Esophagus squamous epithelium (tissue), 5 donors: ENCODE measurements at regions of chr9 and their contacts with region 1.

Region 1: DNA sequence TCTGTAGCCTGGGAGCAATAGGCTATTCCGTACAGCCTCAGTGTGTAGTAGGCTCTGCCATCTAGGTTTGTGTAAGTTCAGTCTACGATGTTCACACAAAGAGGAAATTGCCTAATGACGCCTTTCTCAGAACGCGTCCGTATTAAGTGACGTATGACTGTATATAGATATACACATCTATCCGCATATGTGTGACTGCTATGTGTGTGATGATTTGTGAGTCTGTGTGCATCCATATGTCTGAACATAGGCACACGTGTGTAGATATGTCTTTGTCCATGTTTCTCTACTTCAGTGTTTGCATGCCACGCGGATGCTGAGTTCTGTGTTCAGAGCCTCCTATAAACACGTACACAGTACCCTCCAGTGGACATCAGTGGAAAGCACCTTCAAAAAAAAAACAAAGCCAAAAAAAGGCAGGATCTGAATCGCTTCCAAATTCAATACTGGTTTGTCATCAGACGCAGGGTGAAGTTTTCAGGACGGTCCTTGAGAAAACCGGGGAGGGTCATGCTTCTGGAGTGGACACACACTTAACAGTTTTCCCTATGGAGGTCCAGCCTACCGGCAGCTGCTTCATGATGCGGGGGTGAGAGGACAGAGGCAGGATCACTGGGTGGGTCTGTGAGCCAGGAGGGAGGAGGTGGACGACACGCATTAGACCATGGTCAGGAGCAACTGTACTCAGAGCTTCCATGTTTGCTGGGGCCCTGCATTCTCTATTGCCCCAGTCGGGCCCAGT is 29.5 kb upstream of the ALDH1B1 start:
- DNase-seq: peak; percentile 7
- H3K4me3 ChIP-seq: peak overlapping the region in 1 of 4 donors; percentile 29
- H3K27ac ChIP-seq: peak overlapping the region in 1 of 4 donors; percentile 22
- H3K4me1 ChIP-seq: peaks cover 0 to 24% (median 0%) of the 10 kb centered on the region in 3 donors
- H3K27me3 ChIP-seq: no peaks in the 10 kb centered on the region
- CTCF ChIP-seq: peak; percentile 25 to 52 (median 40)
- POLR2A ChIP-seq: no peak

Region 2: DNA sequence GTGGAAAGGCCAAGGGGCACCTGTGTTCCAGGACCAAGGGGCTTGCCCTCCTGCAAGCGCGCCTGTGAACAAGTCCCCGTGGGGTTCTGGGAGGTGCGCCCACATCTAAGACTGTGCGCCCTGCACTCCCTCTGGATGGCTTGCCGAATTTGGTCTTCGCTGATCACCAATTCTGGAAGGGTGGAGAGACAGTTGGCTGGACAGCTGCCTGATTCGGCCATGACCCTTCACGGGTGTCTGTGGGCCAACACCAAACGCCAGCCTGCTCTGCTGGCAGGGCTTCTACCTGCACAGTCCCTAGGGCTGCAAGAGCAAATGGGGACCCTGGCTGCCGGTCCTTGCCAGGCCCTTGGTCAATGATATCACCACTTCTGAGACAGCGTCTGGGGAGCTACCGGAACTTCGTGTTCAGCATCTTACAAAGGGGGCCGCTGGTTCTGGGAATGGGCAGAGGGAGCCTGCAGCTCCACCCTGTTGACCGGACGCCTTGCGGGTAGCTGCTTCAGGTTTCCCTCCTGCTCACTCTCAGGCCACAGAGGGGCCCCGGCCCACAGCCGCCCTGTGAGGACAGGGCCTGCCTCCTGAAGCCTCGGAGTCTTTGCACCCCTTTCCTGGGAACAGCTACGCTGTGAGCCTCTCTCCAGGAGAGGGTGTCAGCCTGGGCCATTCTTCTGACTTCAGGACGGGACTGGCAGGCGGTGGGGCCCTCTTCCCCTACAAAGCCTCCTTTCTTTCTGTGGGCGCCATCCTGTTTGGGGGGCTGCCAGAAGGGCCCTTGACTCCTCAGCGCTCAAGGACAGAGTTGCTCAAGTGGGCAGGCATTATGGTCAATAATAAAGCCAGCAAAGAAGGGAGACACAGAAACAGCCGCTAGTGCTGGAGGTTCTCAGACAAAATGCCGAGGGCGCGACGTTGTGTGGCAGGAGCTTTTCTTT is 446.7 kb before region 1 on chr9:
- intact Hi-C with region 1: loop called (anchors 5 kb)
- DNase-seq: no peak
- H3K4me3 ChIP-seq: no peak overlapping the region
- H3K27ac ChIP-seq: peak overlapping the region in 3 of 4 donors; percentile 36 to 76 (median 38)
- H3K4me1 ChIP-seq: peaks cover 0 to 69% (median 15%) of the 10 kb centered on the region in 3 donors
- H3K27me3 ChIP-seq: no peaks in the 10 kb centered on the region
- CTCF ChIP-seq: no peak
- POLR2A ChIP-seq: no peak

Region 3: GRCh38 chr9:38035873-38036272 is 327.1 kb before region 1 on chr9:
- intact Hi-C with region 1: no loop called
- DNase-seq: no peak
- H3K4me3 ChIP-seq: no peak overlapping the region
- H3K27ac ChIP-seq: peak overlapping the region in 3 of 4 donors; percentile 16 to 52 (median 51)
- H3K4me1 ChIP-seq: peaks cover 59 to 94% (median 75%) of the 10 kb centered on the region in 3 donors
- H3K27me3 ChIP-seq: no peaks in the 10 kb centered on the region
- CTCF ChIP-seq: no peak
- POLR2A ChIP-seq: no peak

Region 4: DNA sequence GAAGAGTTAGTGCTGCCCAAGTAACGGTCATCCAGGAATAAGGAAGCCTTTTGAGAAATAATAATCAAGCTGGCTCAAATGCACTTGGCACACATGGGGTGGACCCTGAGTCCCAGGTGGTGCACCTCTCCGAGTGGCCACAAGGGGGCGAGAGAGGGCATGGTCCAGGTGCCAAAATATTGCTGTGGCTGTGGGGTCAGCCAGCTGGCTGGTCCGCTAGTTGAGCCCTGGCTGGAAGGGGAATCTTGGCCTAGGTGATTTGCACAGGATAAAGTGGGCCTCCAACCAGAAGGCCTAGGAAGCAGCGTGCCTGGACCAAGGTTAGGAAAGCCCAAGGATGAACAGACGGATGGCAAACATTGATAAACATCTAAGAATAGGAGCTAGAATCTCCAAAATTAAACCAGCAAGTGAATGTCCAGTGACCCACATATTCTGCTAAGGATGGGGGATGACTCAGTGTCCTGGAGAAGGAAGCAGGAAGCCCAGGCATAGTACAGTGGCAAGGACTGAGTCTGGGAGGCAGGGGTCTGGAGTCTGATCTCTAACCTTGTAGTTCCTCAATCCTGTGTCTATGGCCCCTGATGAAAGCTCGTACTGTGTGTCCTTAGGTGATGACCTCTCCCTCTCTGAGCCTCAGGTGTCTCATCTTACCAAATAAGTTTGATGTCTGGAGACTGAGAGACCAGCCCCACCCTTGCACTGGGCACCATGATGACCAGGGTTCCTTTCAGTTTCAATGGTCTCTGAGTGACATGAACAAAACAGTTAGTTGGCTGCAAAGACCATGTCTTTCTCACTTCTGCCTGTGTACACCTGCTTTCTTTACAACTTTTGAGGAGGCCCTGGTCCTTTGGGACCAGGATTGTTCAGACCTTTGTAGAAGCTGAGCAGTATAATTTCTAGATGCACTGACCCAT is 274.8 kb before region 1 on chr9:
- intact Hi-C with region 1: loop called (anchors 10 kb)
- DNase-seq: no peak
- H3K4me3 ChIP-seq: no peak overlapping the region
- H3K27ac ChIP-seq: no peak overlapping the region
- H3K4me1 ChIP-seq: peaks cover 0 to 11% (median 0%) of the 10 kb centered on the region in 3 donors
- H3K27me3 ChIP-seq: no peaks in the 10 kb centered on the region
- CTCF ChIP-seq: peak; percentile 88 to 99 (median 93)
- POLR2A ChIP-seq: no peak

Region 5: DNA sequence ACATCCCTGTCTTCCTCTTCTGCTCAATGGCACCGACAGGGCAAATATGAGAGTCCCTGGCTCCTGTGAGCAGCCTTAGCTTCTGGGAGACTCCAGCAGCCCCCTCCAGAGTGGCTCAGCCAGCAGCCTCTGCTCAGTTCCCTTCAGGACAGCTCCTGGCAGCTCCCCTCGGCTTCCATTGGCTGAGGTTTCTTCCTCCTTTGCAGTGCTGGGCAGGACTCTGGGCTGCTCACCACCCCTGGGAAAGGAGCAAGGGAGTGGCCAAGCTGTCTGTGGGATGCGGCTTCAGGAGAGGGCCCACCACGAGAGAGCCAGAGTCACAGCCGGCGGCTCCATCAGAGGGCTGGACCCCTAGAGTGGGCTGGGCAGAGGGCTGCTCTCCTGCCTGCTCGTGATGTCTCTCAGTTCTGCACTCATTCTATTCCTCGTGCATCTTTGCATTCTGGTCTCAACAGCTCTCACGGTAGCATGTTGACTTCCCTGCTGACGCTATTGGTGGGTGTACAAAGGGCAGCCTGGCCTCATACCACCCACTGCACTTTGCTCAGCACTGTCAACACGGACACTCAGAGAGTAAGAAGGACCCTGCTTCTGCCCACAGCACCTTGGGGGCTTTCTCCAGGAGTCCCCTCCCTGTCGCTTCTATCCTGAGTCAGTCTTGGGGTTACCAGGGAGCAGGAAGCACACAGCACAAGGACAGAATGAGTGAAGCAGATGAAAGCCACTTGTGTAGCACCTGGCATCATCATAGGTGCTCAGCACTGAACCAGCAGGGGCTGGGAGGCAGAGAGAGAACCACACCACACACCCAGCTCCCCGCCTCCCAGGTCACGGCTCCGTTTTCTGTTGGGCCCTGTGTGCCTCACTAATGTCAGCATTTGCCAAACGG is 51.4 kb before region 1 on chr9:
- intact Hi-C with region 1: no loop called
- DNase-seq: no peak
- H3K4me3 ChIP-seq: peak overlapping the region in 1 of 4 donors; percentile 3
- H3K27ac ChIP-seq: peak overlapping the region in 1 of 4 donors; percentile 2
- H3K4me1 ChIP-seq: peaks cover 0 to 18% (median 4%) of the 10 kb centered on the region in 3 donors
- H3K27me3 ChIP-seq: peaks cover 0 to 25% (median 0%) of the 10 kb centered on the region in 4 donors
- CTCF ChIP-seq: no peak
- POLR2A ChIP-seq: no peak

Region 6: DNA sequence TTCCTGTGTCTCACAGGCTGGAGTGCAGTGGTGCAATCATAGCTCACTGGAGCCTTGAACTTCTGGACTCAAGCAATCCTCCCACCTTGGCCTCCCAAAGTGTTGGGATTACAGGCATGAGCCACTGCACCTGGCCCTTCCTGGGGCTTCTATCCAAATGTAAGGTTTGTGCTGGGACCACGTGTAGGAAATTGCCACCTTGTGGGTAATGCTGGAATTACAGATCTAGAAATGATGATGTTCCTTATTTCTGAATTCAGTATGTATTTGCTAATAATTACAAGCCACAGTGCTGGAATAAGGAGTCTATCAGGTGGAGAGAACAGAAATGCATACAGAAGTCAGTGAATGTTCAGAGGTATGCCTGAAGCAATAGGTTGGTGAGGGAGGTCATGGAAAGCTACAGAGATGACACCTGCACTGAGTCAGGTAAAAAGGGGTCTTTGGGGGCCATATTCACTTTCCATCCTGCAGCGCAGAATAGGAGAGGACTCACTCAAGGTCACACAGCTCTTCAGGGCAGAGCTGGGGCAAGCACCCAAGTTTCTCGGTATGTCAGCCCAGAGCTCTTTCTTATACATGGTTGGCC is 70.0 kb after region 1 on chr9:
- intact Hi-C with region 1: no loop called
- DNase-seq: no peak
- H3K4me3 ChIP-seq: no peak overlapping the region
- H3K27ac ChIP-seq: no peak overlapping the region
- H3K4me1 ChIP-seq: peaks cover 0 to 9% (median 0%) of the 10 kb centered on the region in 3 donors
- H3K27me3 ChIP-seq: no peaks in the 10 kb centered on the region
- CTCF ChIP-seq: peak; percentile 24 to 70 (median 62)
- POLR2A ChIP-seq: no peak